ENCODE measurements at regions of chr4 and their contacts with region 1.

Region 1: GRCh38 chr4:25500626-25501316 is 123.7 kb downstream of the ANAPC4 start:
- DNase-seq: no peak
- H3K4me3 ChIP-seq: no peak overlapping the region
- H3K27ac ChIP-seq: no peak overlapping the region
- H3K4me1 ChIP-seq: no peaks in the 10 kb centered on the region
- H3K27me3 ChIP-seq: no peaks in the 10 kb centered on the region
- CTCF ChIP-seq: no peak
- EP300 ChIP-seq: no peak
- POLR2A ChIP-seq: no peak
- RAD21 ChIP-seq: no peak

Region 2: DNA sequence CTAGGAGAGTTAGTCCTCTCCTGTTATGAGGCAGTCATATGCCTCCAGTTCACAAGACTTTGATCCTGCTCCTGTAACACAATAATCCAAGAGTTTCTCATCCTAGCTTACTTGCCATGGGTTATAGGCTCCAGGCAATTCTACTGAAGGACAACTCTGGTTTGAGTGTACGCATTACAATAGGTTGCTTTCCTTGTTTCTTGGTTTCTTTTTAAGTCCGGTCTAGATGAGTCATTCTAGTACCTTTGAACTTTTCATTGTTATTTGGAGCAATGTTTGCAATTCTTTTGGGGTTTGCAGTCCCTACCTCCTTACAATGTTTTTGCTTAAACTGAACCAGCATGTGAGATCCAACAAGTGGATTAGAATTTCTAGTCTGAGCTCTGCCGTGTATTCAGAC is 14.6 kb before region 1 on chr4:
- CTCF ChIA-PET with region 1: interaction called, 20 read pairs
- POLR2A ChIA-PET with region 1: no interaction called
- DNase-seq: no peak
- H3K4me3 ChIP-seq: peak overlapping the region in 1 of 4 experiments; percentile 1; a peak in 1 of 8 replicates
- H3K27ac ChIP-seq: no peak overlapping the region
- H3K4me1 ChIP-seq: peaks cover 0 to 16% (median 7%) of the 10 kb centered on the region in 4 experiments; a peak in 4 of 7 replicates
- H3K27me3 ChIP-seq: no peaks in the 10 kb centered on the region
- CTCF ChIP-seq: no peak
- EP300 ChIP-seq: no peak
- POLR2A ChIP-seq: no peak
- RAD21 ChIP-seq: no peak